GM12878 (cell line): ENCODE measurements at regions of chr7 and their contacts with region 1.

Region 1: DNA sequence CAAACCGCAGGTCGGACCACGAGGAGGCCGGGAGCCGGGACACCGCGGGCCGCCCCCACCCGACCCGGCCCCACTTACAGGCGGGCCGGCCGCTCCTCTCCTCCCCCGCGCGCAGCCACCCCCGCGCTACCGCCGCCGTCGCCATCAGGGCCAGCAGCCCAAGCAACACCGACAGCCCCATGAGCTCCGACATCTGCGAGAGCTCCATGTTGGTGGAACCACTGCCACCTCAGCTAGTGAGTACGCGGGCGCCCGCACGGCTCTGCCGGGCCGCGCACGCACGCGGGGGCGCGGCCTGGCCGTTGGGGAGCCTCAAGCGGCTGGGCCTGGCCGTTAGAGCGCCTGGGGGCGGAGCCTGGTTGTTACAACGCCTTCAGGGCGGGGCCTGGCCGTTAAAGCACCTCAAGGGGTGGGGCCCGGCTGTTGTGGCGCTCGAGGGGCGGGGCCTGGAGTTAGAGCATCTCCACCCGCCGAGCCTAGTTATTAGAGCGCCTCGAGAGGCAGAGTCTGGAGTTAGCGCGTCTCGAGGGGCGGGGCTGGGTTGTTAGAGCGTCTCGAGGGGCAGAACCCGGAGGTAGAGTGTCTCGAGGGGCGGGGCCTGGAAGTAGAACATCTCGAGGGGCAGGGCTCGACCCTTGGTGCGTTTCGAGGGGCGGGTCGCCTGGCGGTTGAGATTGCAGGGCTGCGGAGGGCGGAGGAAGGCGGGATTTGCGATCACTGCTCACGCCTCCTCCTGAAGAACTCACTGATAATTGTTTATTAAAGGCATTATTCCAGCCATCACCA is at the start of gene TBL2:
- DNase-seq: peak; percentile 87
- ATAC-seq: peak; percentile 93
- H3K4me3 ChIP-seq: peak within 1 kb of the TSS; percentile 88
- H3K27ac ChIP-seq: peak within 1 kb of the TSS; percentile 73
- H3K4me1 ChIP-seq: peaks cover 15% of the 10 kb centered on the region
- H3K27me3 ChIP-seq: no peaks in the 10 kb centered on the region
- CTCF ChIP-seq: peak; percentile 24 to 38 (median 36); a peak in 3 of 6 replicates
- EP300 ChIP-seq: no peak
- POLR2A ChIP-seq: peak; percentile 98
- RAD21 ChIP-seq: peak; percentile 23; the same call in 1 of the 2 replicates
- polyA plus RNA-seq, gene TBL2: 1.1 to 2.8 TPM

Region 2: DNA sequence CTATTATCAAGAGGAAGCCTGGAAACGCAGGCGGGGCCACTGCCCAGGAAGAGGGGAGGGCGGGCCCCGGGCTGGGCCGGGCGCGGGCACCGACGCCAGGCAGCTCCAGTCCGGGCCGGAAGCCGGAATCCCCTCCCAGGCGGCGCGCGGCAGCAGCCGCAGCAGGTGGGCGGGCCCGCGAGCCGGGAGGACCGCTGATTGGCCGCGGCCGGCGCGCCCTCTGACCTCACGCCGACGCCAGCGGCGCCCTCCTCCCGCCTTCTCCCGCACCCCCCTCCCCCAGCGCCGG is 21.5 kb before region 1 on chr7:
- CTCF ChIA-PET with region 1: no interaction called
- POLR2A ChIA-PET with region 1: interaction called, 30 read pairs
- RAD21 ChIA-PET with region 1: interaction called, 6 read pairs
- SMC1A ChIA-PET with region 1: no interaction called
- in situ Hi-C with region 1: no loop called
- intact Hi-C with region 1: loop called (anchors 2 kb)
- DNase-seq: peak; percentile 47
- ATAC-seq: peak; percentile 98
- H3K4me3 ChIP-seq: peak overlapping the region; percentile 98
- H3K27ac ChIP-seq: peak overlapping the region; percentile 97
- H3K4me1 ChIP-seq: peaks cover 18% of the 10 kb centered on the region
- H3K27me3 ChIP-seq: no peaks in the 10 kb centered on the region
- CTCF ChIP-seq: no peak
- EP300 ChIP-seq: no peak
- POLR2A ChIP-seq: no peak
- RAD21 ChIP-seq: no peak

Region 3: DNA sequence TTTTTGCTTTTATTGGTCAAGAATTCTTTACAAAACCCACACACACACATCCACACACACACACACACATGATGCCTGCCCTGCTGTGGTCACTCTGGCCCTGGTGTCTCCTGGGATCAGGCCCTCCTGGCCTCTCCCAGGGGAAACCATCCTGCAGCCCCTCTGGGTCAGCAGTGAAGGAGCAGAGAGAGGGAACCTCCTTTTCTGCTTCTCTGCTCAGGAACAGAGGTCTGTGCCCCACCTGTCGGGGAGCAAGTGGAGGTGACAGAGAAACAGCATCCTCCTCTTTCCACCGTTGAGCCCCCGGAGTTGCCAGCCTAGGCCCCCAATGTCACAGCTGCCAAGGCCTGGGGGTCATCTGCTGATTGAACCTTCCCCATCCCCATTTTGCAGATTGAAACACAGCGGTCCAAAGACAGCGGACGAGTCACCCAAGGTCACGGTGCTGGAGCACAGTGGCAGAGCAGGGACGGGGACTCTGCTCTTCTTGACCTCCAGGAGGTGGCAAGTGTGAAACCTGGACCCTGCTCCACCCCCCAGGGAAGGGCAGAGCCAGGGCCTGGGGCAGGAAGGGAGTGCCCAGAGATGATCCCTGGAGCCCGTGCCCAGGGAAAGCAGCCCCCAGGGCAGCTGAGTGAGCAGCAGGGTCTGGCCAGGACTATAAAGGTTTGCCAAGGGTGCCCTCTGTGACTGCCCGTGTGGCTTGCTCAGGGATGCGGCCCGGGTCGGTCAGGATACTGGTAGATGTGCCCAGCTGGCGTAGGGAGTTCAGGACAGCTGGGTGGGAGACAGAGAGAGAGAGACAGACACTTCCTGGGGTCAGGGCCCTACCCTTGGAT is 14.9 kb after region 1 on chr7:
- CTCF ChIA-PET with region 1: interaction called, 3 read pairs
- POLR2A ChIA-PET with region 1: no interaction called
- RAD21 ChIA-PET with region 1: no interaction called
- SMC1A ChIA-PET with region 1: no interaction called
- in situ Hi-C with region 1: no loop called
- intact Hi-C with region 1: loop called (anchors 1 kb)
- DNase-seq: no peak
- ATAC-seq: peak; percentile 55
- H3K4me3 ChIP-seq: no peak overlapping the region
- H3K27ac ChIP-seq: no peak overlapping the region
- H3K4me1 ChIP-seq: no peaks in the 10 kb centered on the region
- H3K27me3 ChIP-seq: no peaks in the 10 kb centered on the region
- CTCF ChIP-seq: peak in 2 of 3 experiments; percentile 9 to 20; a peak in 2 of 6 replicates
- EP300 ChIP-seq: no peak
- POLR2A ChIP-seq: no peak
- RAD21 ChIP-seq: 0 out of 2 replicates have a peak, but pooled peaks have one; percentile 8